ENCODE measurements at regions of chr4 and their contacts with region 1.

Region 1: DNA sequence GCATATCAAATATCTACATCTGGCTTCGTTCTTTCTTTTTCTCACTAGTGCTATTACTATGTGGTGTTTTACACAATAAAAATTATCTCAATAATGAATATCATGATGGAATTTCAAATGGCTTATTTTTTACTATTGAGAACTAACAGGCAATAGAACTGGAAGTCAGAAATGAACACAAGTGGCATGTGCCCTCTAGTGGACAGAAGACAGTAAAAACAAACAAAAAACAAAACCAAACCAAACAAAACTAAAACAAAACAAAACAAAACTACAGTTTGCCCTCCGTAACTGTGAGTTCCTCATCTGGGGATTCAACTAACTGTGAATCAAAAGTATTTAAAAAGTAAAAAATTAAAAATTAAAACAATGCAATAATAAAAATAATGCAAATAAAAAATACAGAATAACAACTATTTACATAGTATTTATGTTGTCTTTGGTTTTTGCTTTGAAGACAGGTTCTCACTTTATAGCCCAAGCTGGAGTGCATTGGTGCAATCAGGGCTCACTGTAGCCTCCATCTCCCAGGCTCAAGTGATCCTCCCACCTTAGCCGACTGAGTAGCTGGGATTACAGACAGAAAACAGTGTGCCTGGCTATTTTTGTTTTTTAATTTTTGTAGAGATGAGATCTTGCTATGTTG is 195.6 kb upstream of the TACR3 start:
- DNase-seq: peak; percentile 3
- H3K4me3 ChIP-seq: no peak overlapping the region
- H3K27ac ChIP-seq: no peak overlapping the region
- H3K4me1 ChIP-seq: no peaks in the 10 kb centered on the region
- H3K27me3 ChIP-seq: no peaks in the 10 kb centered on the region
- CTCF ChIP-seq: peak; percentile 34 to 56
- POLR2A ChIP-seq: no peak

Region 2: DNA sequence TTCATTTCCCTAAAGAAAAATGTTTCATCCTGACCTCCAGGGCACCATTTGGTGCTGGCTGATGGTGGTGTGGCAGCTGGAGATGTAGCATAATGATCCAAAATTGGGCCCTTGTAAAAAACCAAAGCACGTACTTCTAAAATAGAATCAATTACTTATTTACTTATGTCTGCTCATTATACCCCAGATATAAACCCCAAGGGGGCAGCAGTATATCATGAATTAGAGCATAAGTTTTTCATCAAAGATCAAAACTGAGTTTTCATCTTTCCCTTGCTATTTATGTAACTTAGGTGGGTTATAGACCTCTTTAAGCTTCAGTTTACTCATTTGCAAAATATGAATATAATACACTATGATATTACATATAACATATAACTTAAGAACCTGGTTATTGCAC is 436.6 kb before region 1 on chr4:
- CTCF ChIA-PET with region 1: interaction called, 4 read pairs
- POLR2A ChIA-PET with region 1: no interaction called
- dilution Hi-C with region 1: no loop called
- intact Hi-C with region 1: loop called (anchors 2 kb)
- DNase-seq: peak; percentile 4
- H3K4me3 ChIP-seq: no peak overlapping the region
- H3K27ac ChIP-seq: no peak overlapping the region
- H3K4me1 ChIP-seq: no peaks in the 10 kb centered on the region
- H3K27me3 ChIP-seq: no peaks in the 10 kb centered on the region
- CTCF ChIP-seq: no peak
- POLR2A ChIP-seq: no peak

Measured in endothelial cell of umbilical vein (primary cell).